ENCODE measurements at regions of chr18 and their contacts with region 1.

Region 1: GRCh38 chr18:2846636-2847364 is at the start of gene EMILIN2:
- DNase-seq: peak; percentile 73
- ATAC-seq: peak; percentile 21
- H3K4me3 Mint-ChIP-seq: peak within 1 kb of the TSS; percentile 76
- H3K27ac Mint-ChIP-seq: peak within 1 kb of the TSS; percentile 64
- H3K4me1 Mint-ChIP-seq: peaks cover 36% of the 10 kb centered on the region
- H3K27me3 Mint-ChIP-seq: peaks cover 34% of the 10 kb centered on the region
- total RNA-seq, gene EMILIN2: 12.0 to 15.7 TPM

Region 2: DNA sequence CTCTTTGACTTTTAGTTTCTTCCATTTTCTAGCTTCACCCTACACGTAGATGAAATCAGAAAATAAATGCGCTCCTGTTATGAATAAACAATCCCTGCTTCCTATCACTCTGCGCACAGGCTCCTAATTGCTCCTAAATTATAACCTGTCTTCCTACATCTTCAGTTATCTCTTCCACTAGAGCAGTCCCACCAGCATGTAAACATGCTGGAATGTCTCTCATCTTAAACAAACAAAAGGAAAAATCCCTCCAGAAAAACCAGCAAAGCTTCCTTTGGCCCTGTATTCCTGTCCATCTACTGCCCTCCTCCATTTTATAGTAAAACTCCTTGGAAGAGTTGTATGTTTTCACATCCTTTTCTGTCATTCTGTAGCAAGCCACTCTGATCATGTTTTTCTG is 105.1 kb before region 1 on chr18:
- CTCF ChIA-PET with region 1: no interaction called
- POLR2A ChIA-PET with region 1: no interaction called
- intact Hi-C with region 1: no loop called
- DNase-seq: no peak
- ATAC-seq: no peak
- H3K4me3 Mint-ChIP-seq: no peak overlapping the region
- H3K27ac Mint-ChIP-seq: peak overlapping the region; percentile 1
- H3K4me1 Mint-ChIP-seq: peaks cover 3% of the 10 kb centered on the region
- H3K27me3 Mint-ChIP-seq: no peaks in the 10 kb centered on the region

Region 3: GRCh38 chr18:2889761-2890192 is 43.0 kb after region 1 on chr18:
- CTCF ChIA-PET with region 1: interaction called, 3 read pairs
- POLR2A ChIA-PET with region 1: no interaction called
- intact Hi-C with region 1: loop called in 1 of 2 experiments (anchors 5 kb)
- DNase-seq: no peak
- ATAC-seq: peak; percentile 55
- H3K4me3 Mint-ChIP-seq: no peak overlapping the region
- H3K27ac Mint-ChIP-seq: peak overlapping the region; percentile 38
- H3K4me1 Mint-ChIP-seq: peaks cover 31% of the 10 kb centered on the region
- H3K27me3 Mint-ChIP-seq: no peaks in the 10 kb centered on the region

Region 4: GRCh38 chr18:2914881-2915240 is 68.1 kb after region 1 on chr18:
- CTCF ChIA-PET with region 1: no interaction called
- POLR2A ChIA-PET with region 1: no interaction called
- intact Hi-C with region 1: no loop called
- DNase-seq: no peak
- ATAC-seq: no peak
- H3K4me3 Mint-ChIP-seq: no peak overlapping the region
- H3K27ac Mint-ChIP-seq: no peak overlapping the region
- H3K4me1 Mint-ChIP-seq: peaks cover 8% of the 10 kb centered on the region
- H3K27me3 Mint-ChIP-seq: no peaks in the 10 kb centered on the region

Region 5: GRCh38 chr18:2978646-2979045 is 131.8 kb after region 1 on chr18:
- CTCF ChIA-PET with region 1: no interaction called
- POLR2A ChIA-PET with region 1: no interaction called
- intact Hi-C with region 1: loop called in 1 of 2 experiments (anchors 5 kb)
- DNase-seq: peak; percentile 72
- ATAC-seq: peak; percentile 27
- H3K4me3 Mint-ChIP-seq: peak overlapping the region; percentile 74
- H3K27ac Mint-ChIP-seq: peak overlapping the region; percentile 98
- H3K4me1 Mint-ChIP-seq: peaks cover 83% of the 10 kb centered on the region
- H3K27me3 Mint-ChIP-seq: no peaks in the 10 kb centered on the region

Region 6: GRCh38 chr18:3209859-3210569 is 363.2 kb after region 1 on chr18:
- CTCF ChIA-PET with region 1: no interaction called
- POLR2A ChIA-PET with region 1: no interaction called
- intact Hi-C with region 1: no loop called
- DNase-seq: no peak
- ATAC-seq: peak; percentile 33
- H3K4me3 Mint-ChIP-seq: no peak overlapping the region
- H3K27ac Mint-ChIP-seq: no peak overlapping the region
- H3K4me1 Mint-ChIP-seq: peaks cover 12% of the 10 kb centered on the region
- H3K27me3 Mint-ChIP-seq: no peaks in the 10 kb centered on the region

Measured in activated CD4-positive, alpha-beta T cell treated with anti-CD3 and anti-CD28 coated beads for 36 hours (primary cell).